ENCODE measurements at regions of chr10 and their contacts with region 1.

Region 1: DNA sequence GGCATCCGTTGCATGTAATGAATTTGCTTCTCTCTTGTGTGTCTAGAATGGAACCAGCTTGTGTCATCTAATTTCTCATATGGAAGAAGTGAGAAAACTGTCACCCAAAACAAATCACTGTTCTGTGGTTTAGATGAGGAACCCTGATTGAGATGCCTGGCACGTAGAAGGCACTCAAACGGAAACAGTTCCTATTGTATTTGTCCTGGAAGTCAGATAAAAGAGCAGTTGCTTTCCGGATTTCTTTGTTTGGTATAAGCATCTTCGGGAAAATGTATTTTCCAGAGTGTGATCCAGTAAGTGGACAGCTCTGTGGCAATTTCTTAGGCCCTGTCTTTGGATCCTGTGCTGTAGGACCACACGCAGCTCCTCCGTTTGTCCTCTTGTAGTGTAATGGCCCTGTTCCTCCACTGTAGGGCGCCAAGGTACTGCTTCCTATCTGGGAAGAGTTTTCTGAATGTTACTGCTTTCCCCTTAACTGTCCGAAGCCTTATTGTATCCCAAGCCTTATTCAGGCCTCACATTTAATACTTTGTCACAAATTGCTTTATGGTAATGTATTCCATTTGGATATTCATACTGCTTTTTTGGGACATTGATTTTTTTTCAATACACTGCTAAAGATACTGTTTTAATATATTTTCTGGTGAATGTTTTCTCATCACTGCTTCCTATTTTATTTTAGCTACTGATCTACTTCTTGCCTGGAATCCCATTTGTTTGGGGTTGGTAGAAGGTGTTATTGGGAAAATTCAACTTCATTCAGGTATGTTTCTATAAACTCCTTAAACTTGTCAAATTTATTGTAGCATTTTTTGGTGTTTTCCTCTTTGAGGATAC is 24.8 kb downstream of the INPP5F start:
- DNase-seq: peak; percentile 77 to 83
- H3K4me3 ChIP-seq: no peak overlapping the region
- H3K27ac ChIP-seq: no peak overlapping the region
- H3K4me1 ChIP-seq: peaks cover 0 to 19% (median 6%) of the 10 kb centered on the region in 4 donors
- H3K27me3 ChIP-seq: no peaks in the 10 kb centered on the region
- CTCF ChIP-seq: peak; percentile 91 to 93

Region 2: GRCh38 chr10:118754720-118755480 is 995.7 kb before region 1 on chr10 and contains the start of gene CACUL1:
- intact Hi-C with region 1: loop called (anchors 5 kb)
- DNase-seq: peak; percentile 100
- H3K4me3 ChIP-seq: peak within 1 kb of the TSS; percentile 87 to 98
- H3K27ac ChIP-seq: peak within 1 kb of the TSS; percentile 81 to 91
- H3K4me1 ChIP-seq: peaks cover 0 to 37% (median 16%) of the 10 kb centered on the region in 4 donors
- H3K27me3 ChIP-seq: no peaks in the 10 kb centered on the region
- CTCF ChIP-seq: no peak

Region 3: GRCh38 chr10:119608316-119609155 is 142.1 kb before region 1 on chr10:
- intact Hi-C with region 1: no loop called
- DNase-seq: peak in 1 of 2 donors; percentile 43
- H3K4me3 ChIP-seq: peak overlapping the region in 1 of 2 donors; percentile 10
- H3K27ac ChIP-seq: no peak overlapping the region
- H3K4me1 ChIP-seq: peaks cover 0 to 6% (median 3%) of the 10 kb centered on the region in 4 donors
- H3K27me3 ChIP-seq: no peaks in the 10 kb centered on the region
- CTCF ChIP-seq: peak; percentile 59 to 73

Region 4: GRCh38 chr10:119817991-119818888 is 67.6 kb after region 1 on chr10:
- intact Hi-C with region 1: loop called (anchors 10 kb)
- DNase-seq: peak; percentile 32 to 81
- H3K4me3 ChIP-seq: peak overlapping the region; percentile 37 to 51
- H3K27ac ChIP-seq: peak overlapping the region; percentile 9 to 49
- H3K4me1 ChIP-seq: peaks cover 0 to 7% (median 1%) of the 10 kb centered on the region in 4 donors
- H3K27me3 ChIP-seq: no peaks in the 10 kb centered on the region
- CTCF ChIP-seq: no peak

Region 5: GRCh38 chr10:119859420-119860258 is 109.0 kb after region 1 on chr10:
- intact Hi-C with region 1: loop called (anchors 1 kb)
- DNase-seq: no peak
- H3K4me3 ChIP-seq: no peak overlapping the region
- H3K27ac ChIP-seq: no peak overlapping the region
- H3K4me1 ChIP-seq: no peaks in the 10 kb centered on the region
- H3K27me3 ChIP-seq: no peaks in the 10 kb centered on the region
- CTCF ChIP-seq: peak; percentile 63 to 67

Region 6: GRCh38 chr10:120530699-120531098 is 780.1 kb after region 1 on chr10:
- intact Hi-C with region 1: no loop called
- DNase-seq: no peak
- H3K4me3 ChIP-seq: no peak overlapping the region
- H3K27ac ChIP-seq: no peak overlapping the region
- H3K4me1 ChIP-seq: no peaks in the 10 kb centered on the region
- H3K27me3 ChIP-seq: no peaks in the 10 kb centered on the region
- CTCF ChIP-seq: no peak